A673 (cell line): ENCODE measurements at regions of chr3 and their contacts with region 1.

Region 1: GRCh38 chr3:158074591-158074990 is 31.6 kb downstream of the SHOX2 start:
- DNase-seq: no peak
- H3K4me3 ChIP-seq: no peak overlapping the region
- H3K27ac ChIP-seq: no peak overlapping the region
- H3K4me1 ChIP-seq: no peaks in the 10 kb centered on the region
- H3K27me3 ChIP-seq: no peaks in the 10 kb centered on the region
- CTCF ChIP-seq: no peak

Region 2: DNA sequence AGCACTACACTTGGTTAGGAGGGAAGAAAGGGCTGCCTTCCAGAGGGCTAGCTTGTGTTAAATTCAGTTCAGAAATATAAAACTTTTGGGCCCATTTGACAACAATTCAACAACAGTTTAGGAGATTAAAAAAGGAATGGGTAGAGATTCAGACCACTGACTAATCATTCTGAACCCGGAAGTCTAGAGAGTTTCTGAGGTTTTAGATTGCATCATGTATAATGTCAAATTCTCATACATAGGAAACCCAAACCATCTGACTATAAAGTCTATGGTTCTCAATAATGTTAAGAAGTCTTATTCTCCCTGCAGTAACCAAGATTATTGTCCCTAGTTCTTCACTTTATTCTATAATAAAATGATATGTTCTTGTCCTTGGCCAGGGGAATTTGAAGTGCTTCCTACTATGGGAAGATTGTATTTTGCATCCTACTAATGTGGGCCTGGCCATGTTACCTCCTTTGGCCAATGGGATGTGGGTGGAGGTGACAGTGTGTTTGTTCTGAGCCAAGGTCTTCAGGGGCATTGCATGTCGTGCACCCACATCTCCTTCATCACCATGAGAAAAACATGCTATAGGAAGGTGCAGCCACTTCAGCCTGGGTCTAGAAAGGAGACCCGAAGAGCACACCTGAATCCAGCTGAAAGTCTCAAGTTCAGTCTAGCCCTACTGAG is 848.3 kb before region 1 on chr3:
- CTCF ChIA-PET with region 1: interaction called, 10 read pairs
- POLR2A ChIA-PET with region 1: no interaction called
- intact Hi-C with region 1: no loop called
- DNase-seq: no peak
- H3K4me3 ChIP-seq: no peak overlapping the region
- H3K27ac ChIP-seq: no peak overlapping the region
- H3K4me1 ChIP-seq: no peaks in the 10 kb centered on the region
- H3K27me3 ChIP-seq: no peaks in the 10 kb centered on the region
- CTCF ChIP-seq: no peak